CD4-positive, alpha-beta T cell (primary cell): ENCODE measurements at regions of chr16 and their contacts with region 1.

Region 1: GRCh38 chr16:2752035-2752849 is at the start of gene SRRM2:
- DNase-seq: peak; percentile 90 to 98 (median 93)
- ATAC-seq: peak; percentile 84
- H3K4me3 ChIP-seq: peak within 1 kb of the TSS; percentile 97
- H3K4me3 Mint-ChIP-seq: peak within 1 kb of the TSS; percentile 99
- H3K27ac ChIP-seq: peak within 1 kb of the TSS; percentile 97 to 98
- H3K27ac Mint-ChIP-seq: peak within 1 kb of the TSS; percentile 100
- H3K4me1 ChIP-seq: peaks cover 57% of the 10 kb centered on the region
- H3K4me1 Mint-ChIP-seq: peaks cover 58% of the 10 kb centered on the region
- H3K27me3 ChIP-seq: no peaks in the 10 kb centered on the region
- H3K27me3 Mint-ChIP-seq: no peaks in the 10 kb centered on the region
- CTCF ChIP-seq: no peak
- total RNA-seq, gene SRRM2: 1,187 to 1,199 TPM

Region 2: DNA sequence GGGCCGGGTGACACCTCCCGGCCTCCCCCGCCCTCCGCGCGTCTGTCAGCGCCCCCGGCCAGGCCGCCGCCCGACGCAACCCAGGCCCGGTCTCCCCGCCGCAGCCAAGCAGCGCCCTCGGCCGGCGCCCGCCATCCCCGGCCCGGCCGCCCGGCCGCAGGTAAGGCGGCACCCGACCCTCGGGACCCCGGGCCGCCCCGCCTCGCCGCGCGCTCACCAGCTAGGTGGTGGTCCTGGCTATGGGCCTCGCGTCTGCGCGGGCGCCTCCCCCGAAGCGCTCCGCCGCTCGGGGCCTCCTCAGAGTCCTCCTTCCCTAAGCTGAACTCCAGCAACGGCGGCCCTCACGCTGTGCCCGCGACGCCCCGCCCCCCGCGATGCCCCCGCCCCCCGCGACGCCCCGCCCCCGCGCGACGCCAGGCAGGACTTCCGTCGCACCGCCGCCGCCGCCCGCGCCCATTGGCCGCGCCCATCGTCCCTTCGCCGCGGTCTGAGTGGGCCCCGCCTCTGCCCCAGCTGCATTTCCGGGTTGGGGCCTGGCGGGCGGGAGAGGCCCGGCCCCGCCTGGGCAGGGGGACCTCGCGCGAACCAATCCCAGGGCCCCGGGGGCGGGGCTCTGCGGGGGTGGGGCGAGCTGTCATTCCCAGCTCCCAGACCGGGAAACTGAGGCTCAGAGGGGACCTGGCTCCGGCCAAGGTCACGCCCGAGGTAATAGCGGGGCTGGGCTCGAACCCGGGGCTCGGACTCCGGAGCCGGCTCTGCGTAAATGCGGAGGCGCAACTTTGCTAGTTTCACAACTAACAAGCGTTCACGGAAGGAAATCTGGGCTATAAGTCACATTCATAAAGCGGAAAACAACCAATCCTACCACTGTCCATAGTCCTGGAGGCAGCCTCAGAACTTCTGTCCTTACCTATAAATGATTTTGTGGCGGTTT is 78.9 kb before region 1 on chr16:
- CTCF ChIA-PET with region 1: no interaction called
- POLR2A ChIA-PET with region 1: interaction called, 4 read pairs
- intact Hi-C with region 1: loop called in 1 of 2 experiments (anchors 1 kb)
- DNase-seq: peak; percentile 87 to 98 (median 94)
- ATAC-seq: peak; percentile 94
- H3K4me3 ChIP-seq: peak overlapping the region; percentile 86
- H3K4me3 Mint-ChIP-seq: peak overlapping the region; percentile 86
- H3K27ac ChIP-seq: peak overlapping the region; percentile 57 to 66
- H3K27ac Mint-ChIP-seq: peak overlapping the region; percentile 91
- H3K4me1 ChIP-seq: peaks cover 39% of the 10 kb centered on the region
- H3K4me1 Mint-ChIP-seq: peaks cover 27% of the 10 kb centered on the region
- H3K27me3 ChIP-seq: no peaks in the 10 kb centered on the region
- H3K27me3 Mint-ChIP-seq: no peaks in the 10 kb centered on the region
- CTCF ChIP-seq: no peak

Region 3: GRCh38 chr16:2682209-2683021 is 69.8 kb before region 1 on chr16 and contains the start of gene KCTD5:
- CTCF ChIA-PET with region 1: no interaction called
- POLR2A ChIA-PET with region 1: interaction called, 6 read pairs
- intact Hi-C with region 1: loop called in 1 of 2 experiments (anchors 1 kb)
- DNase-seq: peak; percentile 93 to 97 (median 94)
- ATAC-seq: peak; percentile 96
- H3K4me3 ChIP-seq: peak within 1 kb of the TSS; percentile 100
- H3K4me3 Mint-ChIP-seq: peak within 1 kb of the TSS; percentile 96
- H3K27ac ChIP-seq: peak within 1 kb of the TSS; percentile 73 to 77
- H3K27ac Mint-ChIP-seq: peak within 1 kb of the TSS; percentile 91
- H3K4me1 ChIP-seq: peaks cover 32% of the 10 kb centered on the region
- H3K4me1 Mint-ChIP-seq: peaks cover 20% of the 10 kb centered on the region
- H3K27me3 ChIP-seq: no peaks in the 10 kb centered on the region
- H3K27me3 Mint-ChIP-seq: no peaks in the 10 kb centered on the region
- CTCF ChIP-seq: no peak
- total RNA-seq, gene KCTD5: 20.6 to 22.6 TPM

Region 4: GRCh38 chr16:2720719-2721633 is 31.3 kb before region 1 on chr16:
- CTCF ChIA-PET with region 1: no interaction called
- POLR2A ChIA-PET with region 1: no interaction called
- intact Hi-C with region 1: loop called in 1 of 2 experiments (anchors 1 kb)
- DNase-seq: peak; percentile 70 to 94 (median 82)
- ATAC-seq: peak; percentile 87
- H3K4me3 ChIP-seq: peak overlapping the region; percentile 55
- H3K4me3 Mint-ChIP-seq: peak overlapping the region; percentile 81
- H3K27ac ChIP-seq: peak overlapping the region in 1 of 2 donors; percentile 35
- H3K27ac Mint-ChIP-seq: peak overlapping the region; percentile 30
- H3K4me1 ChIP-seq: peaks cover 14% of the 10 kb centered on the region
- H3K4me1 Mint-ChIP-seq: no peaks in the 10 kb centered on the region
- H3K27me3 ChIP-seq: peaks cover 0 to 2% of the 10 kb centered on the region in 2 experiments
- H3K27me3 Mint-ChIP-seq: peaks cover 10% of the 10 kb centered on the region
- CTCF ChIP-seq: peak; percentile 59

Region 5: DNA sequence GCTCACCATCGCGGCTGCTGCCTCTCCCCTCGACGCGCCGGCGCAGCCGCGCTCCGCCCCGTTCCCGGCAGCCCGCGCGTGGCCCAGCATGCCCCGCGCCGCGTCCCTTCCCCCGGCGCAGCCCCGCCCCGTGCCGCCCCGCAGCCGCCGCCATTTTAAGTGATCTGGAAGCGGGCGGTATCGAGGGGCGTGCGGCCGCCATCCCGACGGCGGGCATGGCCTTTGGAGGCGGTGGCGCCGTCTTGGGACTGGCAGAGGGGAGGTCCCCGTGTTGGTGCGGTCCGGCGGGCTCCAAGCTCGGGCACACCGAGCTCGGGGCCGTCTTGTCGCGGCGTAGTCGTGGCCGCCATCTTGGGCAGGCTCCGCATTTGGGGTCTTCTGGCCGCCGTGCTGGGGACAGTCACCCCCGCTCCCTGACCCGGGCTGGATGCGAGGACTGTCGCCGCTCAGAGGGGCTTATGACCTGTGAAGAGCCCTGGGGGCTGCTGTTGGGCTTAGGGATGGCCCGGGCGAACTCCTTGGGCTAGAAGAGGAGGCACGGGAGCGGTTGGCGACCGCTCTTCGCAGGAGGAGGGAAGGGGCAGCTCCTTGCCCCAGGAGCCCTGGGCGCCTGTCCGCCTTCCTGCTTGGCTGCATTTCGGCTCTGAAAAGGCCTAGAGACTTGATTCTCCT is 25.1 kb after region 1 on chr16 and contains the start of gene ELOB:
- CTCF ChIA-PET with region 1: interaction called, 3 read pairs
- POLR2A ChIA-PET with region 1: interaction called, 88 read pairs
- intact Hi-C with region 1: loop called (anchors 1 to 2 kb)
- DNase-seq: peak; percentile 79 to 96 (median 89)
- ATAC-seq: peak; percentile 89
- H3K4me3 ChIP-seq: peak within 1 kb of the TSS; percentile 88
- H3K4me3 Mint-ChIP-seq: peak within 1 kb of the TSS; percentile 98
- H3K27ac ChIP-seq: peak within 1 kb of the TSS; percentile 97 to 98
- H3K27ac Mint-ChIP-seq: peak within 1 kb of the TSS; percentile 100
- H3K4me1 ChIP-seq: peaks cover 49% of the 10 kb centered on the region
- H3K4me1 Mint-ChIP-seq: peaks cover 36% of the 10 kb centered on the region
- H3K27me3 ChIP-seq: no peaks in the 10 kb centered on the region
- H3K27me3 Mint-ChIP-seq: no peaks in the 10 kb centered on the region
- CTCF ChIP-seq: no peak
- total RNA-seq, gene ELOB: 102 to 103 TPM

Region 6: GRCh38 chr16:2784951-2785635 is 32.9 kb after region 1 on chr16:
- CTCF ChIA-PET with region 1: no interaction called
- POLR2A ChIA-PET with region 1: interaction called, 16 read pairs
- intact Hi-C with region 1: no loop called
- DNase-seq: peak in 8 of 14 experiments; percentile 26 to 67 (median 40)
- ATAC-seq: peak; percentile 71
- H3K4me3 ChIP-seq: peak overlapping the region; percentile 60
- H3K4me3 Mint-ChIP-seq: peak overlapping the region; percentile 93
- H3K27ac ChIP-seq: no peak overlapping the region
- H3K27ac Mint-ChIP-seq: peak overlapping the region; percentile 68
- H3K4me1 ChIP-seq: peaks cover 24% of the 10 kb centered on the region
- H3K4me1 Mint-ChIP-seq: peaks cover 4% of the 10 kb centered on the region
- H3K27me3 ChIP-seq: peaks cover 5 to 14% of the 10 kb centered on the region in 2 experiments
- H3K27me3 Mint-ChIP-seq: peaks cover 14% of the 10 kb centered on the region
- CTCF ChIP-seq: no peak

Region 7: DNA sequence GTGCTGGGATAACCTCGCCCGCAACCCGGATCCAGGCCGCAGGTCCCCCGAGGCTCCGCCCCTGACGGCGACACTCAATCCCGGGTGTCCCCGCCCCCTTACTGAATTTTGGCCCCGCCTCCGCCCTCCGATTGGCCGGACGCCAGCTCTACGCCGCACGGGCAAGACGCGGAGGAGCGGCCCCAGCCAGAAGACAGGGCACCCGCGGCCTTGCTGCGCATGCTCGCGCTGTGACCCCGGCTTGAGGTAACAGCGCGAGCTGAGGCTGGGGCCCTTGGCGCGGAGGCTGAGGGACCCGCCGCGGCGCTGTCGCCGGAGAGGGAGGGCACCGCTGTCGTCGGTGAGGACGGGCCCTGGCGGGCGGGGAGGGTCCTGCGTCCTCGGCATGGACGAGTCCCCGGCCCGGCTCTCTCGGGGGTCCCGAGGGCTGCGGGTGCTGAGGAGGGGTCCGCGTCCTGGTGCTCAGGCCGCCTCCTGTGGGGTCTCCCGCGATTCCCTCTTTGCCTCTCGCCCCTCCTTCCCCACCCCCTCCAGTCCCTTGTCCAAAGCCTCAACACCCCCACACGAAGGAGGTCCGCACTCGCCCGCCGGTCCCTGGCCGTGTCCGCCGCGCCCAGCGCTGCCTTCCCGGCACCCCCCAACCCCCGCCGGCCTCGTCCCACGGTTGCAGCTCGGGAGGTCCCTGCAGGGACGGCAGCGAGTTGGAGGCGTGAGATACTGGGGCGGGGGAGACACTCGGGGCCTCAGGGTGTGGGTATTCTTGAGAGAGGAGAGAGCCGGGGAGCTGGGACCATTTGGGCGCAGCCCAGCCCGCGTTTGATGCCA is 131.0 kb after region 1 on chr16 and contains the start of gene FLYWCH2:
- CTCF ChIA-PET with region 1: no interaction called
- POLR2A ChIA-PET with region 1: interaction called, 12 read pairs
- intact Hi-C with region 1: no loop called
- DNase-seq: peak; percentile 98 to 100 (median 99)
- ATAC-seq: peak; percentile 77
- H3K4me3 ChIP-seq: peak within 1 kb of the TSS; percentile 75
- H3K4me3 Mint-ChIP-seq: peak within 1 kb of the TSS; percentile 93
- H3K27ac ChIP-seq: peak within 1 kb of the TSS; percentile 89 to 93
- H3K27ac Mint-ChIP-seq: peak within 1 kb of the TSS; percentile 99
- H3K4me1 ChIP-seq: peaks cover 16% of the 10 kb centered on the region
- H3K4me1 Mint-ChIP-seq: peaks cover 13% of the 10 kb centered on the region
- H3K27me3 ChIP-seq: no peaks in the 10 kb centered on the region
- H3K27me3 Mint-ChIP-seq: no peaks in the 10 kb centered on the region
- CTCF ChIP-seq: no peak
- total RNA-seq, gene FLYWCH2: 7.8 to 8.1 TPM